Head of caudate nucleus (tissue), 42 donors: ENCODE measurements at regions of chr17 and their contacts with region 1.

Region 1: DNA sequence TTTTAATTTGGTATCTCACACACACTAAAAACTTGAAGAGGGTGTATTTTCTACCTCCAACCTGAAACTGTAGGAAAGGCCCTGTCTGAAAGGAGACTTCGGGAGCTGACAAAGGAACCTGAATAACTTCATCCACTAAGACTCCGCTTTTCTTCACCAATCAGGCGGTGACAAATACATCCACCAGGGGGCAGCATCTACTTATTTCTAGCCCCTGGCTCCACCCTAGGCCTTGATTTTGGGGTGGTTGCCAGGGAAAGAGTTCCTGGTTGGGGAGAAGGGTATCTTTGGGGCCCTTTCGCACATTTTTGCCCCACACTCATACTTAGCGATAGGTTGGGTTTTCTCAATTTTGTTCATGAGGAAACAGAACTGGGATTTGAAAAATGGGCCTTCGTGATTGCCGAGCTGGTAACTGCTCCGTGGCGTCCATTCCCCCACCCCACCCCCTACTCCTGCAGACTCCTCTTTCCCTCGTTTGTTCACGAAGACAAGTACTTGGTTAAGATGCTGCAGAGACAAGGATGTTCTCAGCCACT is 4.8 kb upstream of the ARL4D start:
- DNase-seq: peak; percentile 72 to 99 (median 95)

Region 2: GRCh38 chr17:43483674-43484372 is 89.8 kb after region 1 on chr17 and contains the start of gene DHX8:
- intact Hi-C with region 1: loop called (anchors 1 kb)
- DNase-seq: peak; percentile 93 to 99 (median 97)

Region 3: GRCh38 chr17:43556292-43556691 is 162.3 kb after region 1 on chr17:
- intact Hi-C with region 1: no loop called
- DNase-seq: no peak